ENCODE measurements at regions of chr9 and their contacts with region 1.

Region 1: GRCh38 chr9:135992486-135993408 is 31.6 kb upstream of the UBAC1 start:
- DNase-seq: peak; percentile 81
- ATAC-seq: peak; percentile 38
- H3K4me3 ChIP-seq: peak overlapping the region; percentile 65 to 88 (median 74)
- H3K27ac ChIP-seq: peak overlapping the region; percentile 98
- H3K4me1 ChIP-seq: peaks cover 72% of the 10 kb centered on the region
- H3K27me3 ChIP-seq: peaks cover 2 to 19% of the 10 kb centered on the region in 2 experiments; a peak in 3 of 5 replicates
- CTCF ChIP-seq: peak; percentile 19
- EP300 ChIP-seq: 0 out of 4 replicates have a peak, but pooled peaks of 1 of the 2 experiments have one; percentile 15
- POLR2A ChIP-seq: peak in 1 of 2 experiments; percentile 65; a peak in 1 of 4 replicates
- RAD21 ChIP-seq: no peak

Region 2: GRCh38 chr9:136002881-136003280 is 10.1 kb after region 1 on chr9:
- CTCF ChIA-PET with region 1: no interaction called
- POLR2A ChIA-PET with region 1: interaction called, 99 read pairs
- in situ Hi-C with region 1: no loop called
- intact Hi-C with region 1: loop called (anchors 1 kb)
- DNase-seq: no peak
- ATAC-seq: peak; percentile 51
- H3K4me3 ChIP-seq: peak overlapping the region; percentile 33 to 68 (median 34); a peak in 5 of 6 replicates
- H3K27ac ChIP-seq: no peak overlapping the region
- H3K4me1 ChIP-seq: peaks cover 88% of the 10 kb centered on the region
- H3K27me3 ChIP-seq: no peaks in the 10 kb centered on the region; a peak in 1 of 5 replicates
- CTCF ChIP-seq: peak; percentile 17
- EP300 ChIP-seq: no peak
- POLR2A ChIP-seq: no peak
- RAD21 ChIP-seq: no peak

Region 3: DNA sequence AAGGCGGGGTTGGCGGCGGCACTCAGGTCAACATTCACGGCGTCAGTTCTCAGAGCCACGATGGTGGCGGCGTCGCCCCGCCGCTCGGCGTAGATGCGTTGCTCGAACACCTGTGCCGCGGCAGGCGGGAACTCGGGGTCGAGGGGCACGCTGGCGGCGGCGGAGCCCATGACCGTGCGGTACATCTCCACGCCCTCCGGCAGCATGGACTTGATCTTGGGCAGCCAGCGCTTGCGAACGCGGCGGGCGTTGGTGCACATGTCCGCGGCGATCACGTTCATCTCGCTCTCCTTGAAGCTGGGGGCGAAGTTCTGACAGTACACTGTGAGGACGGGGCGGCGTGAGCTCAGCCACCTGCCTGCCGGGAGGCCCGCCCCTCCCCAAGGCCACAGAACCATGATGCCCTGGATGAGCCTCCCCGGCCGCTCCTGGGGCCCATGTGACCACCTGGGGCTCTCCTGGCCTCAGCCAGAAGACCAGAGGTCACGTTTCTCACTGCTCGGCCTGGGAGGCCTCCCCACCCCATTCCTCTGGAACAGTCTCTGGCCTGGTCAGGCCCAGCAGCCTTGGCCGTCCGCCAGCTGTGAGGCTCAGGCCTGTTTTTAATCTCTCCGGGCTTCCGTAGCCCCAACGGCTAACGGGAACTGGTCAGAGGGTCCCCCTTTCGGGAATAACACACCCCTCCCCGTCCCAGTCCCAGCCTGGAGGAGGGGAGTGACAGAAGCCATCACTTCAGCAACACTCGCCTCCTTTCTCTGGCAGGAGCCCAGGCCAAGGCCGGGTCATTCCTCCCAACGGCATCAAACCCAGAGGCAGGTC is 19.2 kb after region 1 on chr9:
- CTCF ChIA-PET with region 1: no interaction called
- POLR2A ChIA-PET with region 1: interaction called, 98 read pairs
- in situ Hi-C with region 1: no loop called
- intact Hi-C with region 1: loop called (anchors 1 kb)
- DNase-seq: peak; percentile 97
- ATAC-seq: peak; percentile 89
- H3K4me3 ChIP-seq: peak overlapping the region; percentile 28 to 66 (median 38); a peak in 5 of 6 replicates
- H3K27ac ChIP-seq: peak overlapping the region; percentile 88
- H3K4me1 ChIP-seq: peaks cover 93% of the 10 kb centered on the region
- H3K27me3 ChIP-seq: no peaks in the 10 kb centered on the region
- CTCF ChIP-seq: peak; percentile 23
- EP300 ChIP-seq: peak in 1 of 2 experiments; percentile 71; a peak in 2 of 4 replicates
- POLR2A ChIP-seq: peak in 1 of 2 experiments; percentile 55; a peak in 1 of 4 replicates
- RAD21 ChIP-seq: peak; percentile 54

Region 4: GRCh38 chr9:136051517-136052432 is 59.0 kb after region 1 on chr9:
- CTCF ChIA-PET with region 1: no interaction called
- POLR2A ChIA-PET with region 1: interaction called, 47 read pairs
- in situ Hi-C with region 1: no loop called
- intact Hi-C with region 1: loop called (anchors 5 kb)
- DNase-seq: peak; percentile 96
- ATAC-seq: peak; percentile 80
- H3K4me3 ChIP-seq: peak overlapping the region; percentile 49 to 72 (median 67); a peak in 5 of 6 replicates
- H3K27ac ChIP-seq: peak overlapping the region; percentile 75
- H3K4me1 ChIP-seq: peaks cover 33% of the 10 kb centered on the region
- H3K27me3 ChIP-seq: no peaks in the 10 kb centered on the region
- CTCF ChIP-seq: no peak
- EP300 ChIP-seq: peak in 1 of 2 experiments; percentile 57; a peak in 1 of 4 replicates
- POLR2A ChIP-seq: peak in 1 of 2 experiments; percentile 61; a peak in 2 of 4 replicates
- RAD21 ChIP-seq: no peak

Region 5: GRCh38 chr9:136093995-136094881 is 101.5 kb after region 1 on chr9:
- CTCF ChIA-PET with region 1: no interaction called
- POLR2A ChIA-PET with region 1: interaction called, 35 read pairs
- in situ Hi-C with region 1: no loop called
- intact Hi-C with region 1: no loop called
- DNase-seq: peak; percentile 72
- ATAC-seq: peak; percentile 69
- H3K4me3 ChIP-seq: peak overlapping the region; percentile 74 to 81 (median 81)
- H3K27ac ChIP-seq: peak overlapping the region; percentile 82
- H3K4me1 ChIP-seq: peaks cover 56% of the 10 kb centered on the region
- H3K27me3 ChIP-seq: peaks cover 7 to 20% of the 10 kb centered on the region in 2 experiments; a peak in 4 of 5 replicates
- CTCF ChIP-seq: peak; percentile 31
- EP300 ChIP-seq: no peak; a peak in 1 of 4 replicates
- POLR2A ChIP-seq: peak in 1 of 2 experiments; percentile 57; a peak in 1 of 4 replicates
- RAD21 ChIP-seq: peak; percentile 40

Region 6: DNA sequence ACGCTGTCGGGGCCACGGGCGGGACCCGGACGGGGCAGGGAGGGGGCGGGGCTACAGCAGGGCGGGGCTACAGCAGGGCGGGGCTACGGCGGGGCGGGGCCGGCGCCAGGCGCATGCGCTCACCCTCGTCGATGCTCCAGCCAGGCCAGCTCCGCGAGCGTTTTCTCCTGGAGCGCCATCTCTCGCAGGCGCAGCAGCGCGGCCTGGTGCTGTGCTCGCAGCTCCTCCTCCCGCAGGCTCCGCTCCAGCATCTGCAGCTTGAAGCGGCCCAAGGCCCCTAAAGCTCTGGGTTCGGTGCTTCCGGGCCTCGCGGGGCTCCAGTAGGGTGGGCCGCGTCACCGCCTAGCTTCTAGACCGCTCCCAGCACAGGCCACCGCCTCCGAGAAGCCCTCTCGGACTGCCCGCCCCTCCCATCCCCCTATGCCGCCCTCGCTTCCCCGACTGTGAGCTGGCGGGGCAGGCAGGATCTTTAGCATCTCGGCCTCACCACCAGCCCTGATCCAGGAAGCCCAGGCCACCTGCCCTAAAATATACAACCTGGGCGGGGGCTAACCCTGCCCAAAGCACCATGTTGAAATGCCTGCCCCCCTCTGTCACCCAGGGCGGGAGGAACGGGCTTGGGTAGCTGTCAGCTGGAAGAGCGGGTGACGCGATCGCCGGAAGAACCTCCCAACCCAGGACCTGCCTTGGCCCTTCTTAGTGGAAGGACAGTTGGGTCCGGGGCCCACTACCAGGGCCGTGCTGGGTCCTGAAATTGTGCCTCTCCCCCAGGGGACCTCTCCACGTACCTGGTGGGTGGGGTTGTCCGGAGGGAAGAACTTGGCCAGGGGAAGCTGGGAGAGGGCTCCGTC is 274.7 kb after region 1 on chr9:
- CTCF ChIA-PET with region 1: no interaction called
- POLR2A ChIA-PET with region 1: no interaction called
- in situ Hi-C with region 1: loop called (anchors 25 kb)
- intact Hi-C with region 1: no loop called
- DNase-seq: peak; percentile 54
- ATAC-seq: peak; percentile 81
- H3K4me3 ChIP-seq: peak overlapping the region; percentile 40 to 72 (median 46); a peak in 5 of 6 replicates
- H3K27ac ChIP-seq: no peak overlapping the region
- H3K4me1 ChIP-seq: peaks cover 24% of the 10 kb centered on the region
- H3K27me3 ChIP-seq: peaks cover 9 to 61% of the 10 kb centered on the region in 2 experiments; a peak in 3 of 5 replicates
- CTCF ChIP-seq: peak; percentile 71
- EP300 ChIP-seq: no peak
- POLR2A ChIP-seq: no peak; a peak in 1 of 4 replicates
- RAD21 ChIP-seq: 0 out of 2 replicates have a peak, but pooled peaks have one; percentile 24

Measured in HepG2 (cell line).